Heart left ventricle (tissue), 16 donors: ENCODE measurements at regions of chr6 and their contacts with region 1.

Region 1: DNA sequence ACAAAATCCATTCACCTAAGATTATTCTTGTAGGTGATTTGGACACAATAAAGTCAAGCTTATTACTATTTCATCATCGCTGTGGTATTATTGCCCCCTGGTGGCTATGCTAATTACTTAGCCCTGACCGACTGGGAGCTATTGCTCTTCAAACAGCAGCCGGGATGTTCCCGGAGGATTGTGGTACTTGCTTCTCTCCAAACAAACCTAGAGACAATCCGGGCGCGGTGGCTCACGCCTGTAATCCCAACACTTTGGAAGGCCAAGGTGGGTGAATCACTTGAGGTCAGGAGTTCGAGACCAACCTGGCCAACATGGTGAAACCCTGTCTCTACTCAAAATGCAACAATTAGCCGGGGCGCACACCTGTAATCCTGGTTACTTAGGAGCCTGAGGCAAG is 15.4 kb upstream of the STMND1 start:
- DNase-seq: peak in 3 of 5 donors; percentile 45 to 46 (median 46)
- ATAC-seq: peak; percentile 75 to 85 (median 78)
- H3K4me3 ChIP-seq: no peak overlapping the region
- H3K27ac ChIP-seq: no peak overlapping the region
- H3K4me1 ChIP-seq: peaks cover 0 to 7% (median 0%) of the 10 kb centered on the region in 12 donors
- H3K27me3 ChIP-seq: no peaks in the 10 kb centered on the region
- CTCF ChIP-seq: peak; percentile 44 to 72 (median 66)
- POLR2A ChIP-seq: no peak

Region 2: GRCh38 chr6:16514249-16514648 is 572.2 kb before region 1 on chr6:
- intact Hi-C with region 1: loop called in 3 of 10 experiments (anchors 5 to 10 kb)
- DNase-seq: no peak
- ATAC-seq: peak; percentile 27 to 57 (median 30)
- H3K4me3 ChIP-seq: no peak overlapping the region
- H3K27ac ChIP-seq: no peak overlapping the region
- H3K4me1 ChIP-seq: peaks cover 0 to 60% (median 35%) of the 10 kb centered on the region in 12 donors
- H3K27me3 ChIP-seq: no peaks in the 10 kb centered on the region
- CTCF ChIP-seq: peak in 11 of 12 donors; percentile 22 to 61 (median 36)
- POLR2A ChIP-seq: no peak

Region 3: GRCh38 chr6:16540804-16541752 is 545.4 kb before region 1 on chr6:
- intact Hi-C with region 1: no loop called
- DNase-seq: peak in 3 of 5 donors; percentile 25 to 73 (median 62)
- ATAC-seq: peak; percentile 47 to 81 (median 64)
- H3K4me3 ChIP-seq: peak overlapping the region in 3 of 12 donors; percentile 1 to 27 (median 23)
- H3K27ac ChIP-seq: peak overlapping the region in 11 of 12 donors; percentile 6 to 88 (median 57)
- H3K4me1 ChIP-seq: peaks cover 4 to 48% (median 34%) of the 10 kb centered on the region in 12 donors
- H3K27me3 ChIP-seq: no peaks in the 10 kb centered on the region
- CTCF ChIP-seq: peak in 7 of 12 donors; percentile 6 to 47 (median 22)
- POLR2A ChIP-seq: no peak

Region 4: DNA sequence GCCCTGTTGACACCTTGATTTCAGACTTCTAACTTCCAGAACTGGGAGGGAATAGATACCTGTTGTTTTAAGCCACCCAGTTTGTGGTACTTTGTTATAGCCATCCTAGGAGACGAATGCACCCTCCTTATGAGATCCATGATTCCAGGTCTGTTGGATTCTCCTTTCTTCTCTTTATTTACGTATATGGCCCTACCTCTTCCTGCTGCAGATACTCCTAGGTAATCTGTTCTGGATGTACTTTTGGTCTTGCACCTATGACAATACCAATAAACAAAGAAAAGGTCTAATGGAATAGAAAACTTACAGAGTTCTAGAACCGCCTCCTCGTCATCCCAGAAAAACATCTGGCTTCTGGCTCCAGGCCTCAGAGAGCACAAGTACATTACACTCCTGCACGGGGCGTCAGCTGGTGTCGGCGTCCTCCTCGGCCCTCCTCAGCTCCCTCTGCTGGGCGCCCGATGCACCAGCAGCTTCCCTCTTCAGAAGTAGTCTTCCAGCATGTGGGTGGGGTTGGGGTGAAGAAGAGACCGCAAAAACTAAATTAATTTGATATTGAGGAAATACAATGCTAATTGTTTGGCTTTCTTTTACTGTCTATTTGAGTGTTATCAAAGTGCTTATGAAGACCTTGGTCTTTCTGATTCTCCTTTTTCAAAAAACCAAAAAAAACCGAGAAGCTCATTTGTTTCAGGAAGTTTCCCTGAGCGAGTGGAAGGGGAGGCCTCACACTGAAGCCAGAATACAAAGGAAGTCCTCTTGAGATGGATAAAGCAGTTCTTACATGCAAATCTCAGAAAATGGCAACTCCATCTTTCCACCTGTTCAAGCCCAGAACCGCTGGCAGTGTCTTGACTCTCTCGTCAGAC is 315.5 kb before region 1 on chr6:
- intact Hi-C with region 1: loop called in 7 of 10 experiments (anchors 5 to 10 kb)
- DNase-seq: peak; percentile 80 to 91 (median 84)
- ATAC-seq: peak; percentile 78 to 91 (median 85)
- H3K4me3 ChIP-seq: no peak overlapping the region
- H3K27ac ChIP-seq: peak overlapping the region in 4 of 12 donors; percentile 11 to 63 (median 28)
- H3K4me1 ChIP-seq: peaks cover 0 to 45% (median 31%) of the 10 kb centered on the region in 12 donors
- H3K27me3 ChIP-seq: no peaks in the 10 kb centered on the region
- CTCF ChIP-seq: peak; percentile 88 to 99 (median 93)
- POLR2A ChIP-seq: no peak

Region 5: DNA sequence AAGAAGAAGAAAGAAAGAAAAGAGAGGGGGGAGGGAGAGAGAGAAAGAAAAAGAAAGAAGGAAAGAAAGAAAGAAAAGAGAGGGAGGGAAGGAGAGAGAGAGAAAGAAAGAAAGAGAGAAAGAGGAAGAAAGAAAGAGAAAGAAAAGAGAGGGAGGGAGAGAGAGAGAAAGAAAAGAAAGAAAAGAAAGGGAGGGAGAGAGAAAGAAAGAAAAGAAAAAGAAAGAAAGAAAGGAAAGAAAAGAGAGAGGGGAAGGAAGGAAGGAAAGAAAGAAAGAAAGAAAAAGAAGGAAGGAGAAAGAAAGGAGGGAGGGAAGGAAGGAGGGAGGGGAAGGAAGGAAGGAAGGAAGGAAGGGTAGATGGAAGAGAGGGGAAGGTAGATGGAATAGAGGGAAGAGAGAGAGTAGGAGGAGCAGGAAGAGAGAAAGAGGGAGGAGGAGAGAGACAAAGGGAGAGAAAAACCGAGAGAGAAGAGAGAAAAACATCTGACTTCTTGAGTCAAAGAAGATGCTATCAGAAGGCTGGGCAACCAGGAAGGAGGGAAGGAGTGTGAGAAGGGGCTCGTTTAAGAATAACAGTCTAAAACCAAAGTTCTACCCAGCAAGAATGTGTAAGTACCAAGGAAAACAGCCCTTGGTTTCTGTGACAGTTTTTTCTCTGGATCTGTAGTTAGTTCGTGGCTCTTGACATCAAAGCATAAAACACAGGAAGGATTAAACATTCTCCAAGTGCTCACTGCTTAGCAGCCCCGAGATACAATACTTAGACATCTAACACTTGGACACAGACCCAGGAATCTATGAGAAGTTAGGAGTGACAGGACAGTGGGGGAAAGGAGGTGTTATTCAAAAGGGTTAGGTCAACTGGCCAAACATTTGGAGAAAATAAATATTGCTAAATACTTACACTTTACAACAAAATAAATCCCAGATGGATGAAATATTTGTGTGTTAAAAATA is 116.5 kb before region 1 on chr6:
- intact Hi-C with region 1: loop called in 4 of 10 experiments (anchors 5 to 10 kb)
- DNase-seq: no peak
- ATAC-seq: no peak
- H3K4me3 ChIP-seq: no peak overlapping the region
- H3K27ac ChIP-seq: no peak overlapping the region
- H3K4me1 ChIP-seq: peaks cover 0 to 3% (median 0%) of the 10 kb centered on the region in 12 donors
- H3K27me3 ChIP-seq: no peaks in the 10 kb centered on the region
- CTCF ChIP-seq: no peak
- POLR2A ChIP-seq: no peak